Naive thymus-derived CD4-positive, alpha-beta T cell (primary cell): ENCODE measurements at regions of chr3 and their contacts with region 1.

Region 1: GRCh38 chr3:4517643-4518311 is 24.6 kb downstream of the ITPR1 start:
- DNase-seq: no peak
- ATAC-seq: no peak
- H3K4me3 ChIP-seq: no peak overlapping the region
- H3K4me3 Mint-ChIP-seq: peak overlapping the region; percentile 2 to 79 (median 50)
- H3K27ac ChIP-seq: peak overlapping the region; percentile 40
- H3K27ac Mint-ChIP-seq: peak overlapping the region; percentile 24 to 95 (median 79)
- H3K4me1 ChIP-seq: peaks cover 14 to 24% of the 10 kb centered on the region in 2 donors
- H3K4me1 Mint-ChIP-seq: peaks cover 31 to 62% (median 50%) of the 10 kb centered on the region in 7 donors
- H3K27me3 ChIP-seq: no peaks in the 10 kb centered on the region
- H3K27me3 Mint-ChIP-seq: no peaks in the 10 kb centered on the region

Region 2: GRCh38 chr3:4504340-4505261 is 13.2 kb before region 1 on chr3:
- CTCF ChIA-PET with region 1: interaction called, 6 read pairs
- POLR2A ChIA-PET with region 1: interaction called, 41 read pairs
- intact Hi-C with region 1: loop called in 1 of 2 experiments (anchors 1 kb)
- DNase-seq: peak in 7 of 9 donors; percentile 45 to 67 (median 52)
- ATAC-seq: peak; percentile 79
- H3K4me3 ChIP-seq: peak overlapping the region; percentile 78
- H3K4me3 Mint-ChIP-seq: peak overlapping the region; percentile 81 to 95 (median 89)
- H3K27ac ChIP-seq: peak overlapping the region; percentile 79
- H3K27ac Mint-ChIP-seq: peak overlapping the region; percentile 90 to 96 (median 94)
- H3K4me1 ChIP-seq: peaks cover 18 to 22% of the 10 kb centered on the region in 2 donors
- H3K4me1 Mint-ChIP-seq: peaks cover 44 to 63% (median 57%) of the 10 kb centered on the region in 7 donors
- H3K27me3 ChIP-seq: no peaks in the 10 kb centered on the region
- H3K27me3 Mint-ChIP-seq: no peaks in the 10 kb centered on the region

Region 3: GRCh38 chr3:4571690-4572334 is 54.0 kb after region 1 on chr3:
- CTCF ChIA-PET with region 1: interaction called, 5 read pairs
- POLR2A ChIA-PET with region 1: interaction called, 3 read pairs
- intact Hi-C with region 1: loop called (anchors 1 to 5 kb)
- DNase-seq: peak in 2 of 9 donors; percentile 12 to 18
- ATAC-seq: peak; percentile 49
- H3K4me3 ChIP-seq: no peak overlapping the region
- H3K4me3 Mint-ChIP-seq: no peak overlapping the region
- H3K27ac ChIP-seq: no peak overlapping the region
- H3K27ac Mint-ChIP-seq: peak overlapping the region in 2 of 9 donors; percentile 28 to 40
- H3K4me1 ChIP-seq: no peaks in the 10 kb centered on the region
- H3K4me1 Mint-ChIP-seq: peaks cover 6 to 59% (median 43%) of the 10 kb centered on the region in 7 donors
- H3K27me3 ChIP-seq: no peaks in the 10 kb centered on the region
- H3K27me3 Mint-ChIP-seq: no peaks in the 10 kb centered on the region